Heart right ventricle (tissue), 16 donors: ENCODE measurements at regions of chr3 and their contacts with region 1.

Region 1: GRCh38 chr3:87082796-87083440 is 92.0 kb upstream of the VGLL3 start:
- DNase-seq: peak in 1 of 2 donors; percentile 23
- ATAC-seq: peak in 5 of 8 donors; percentile 33 to 79 (median 62)
- H3K4me3 ChIP-seq: no peak overlapping the region
- H3K27ac ChIP-seq: no peak overlapping the region
- H3K4me1 ChIP-seq: no peaks in the 10 kb centered on the region
- H3K27me3 ChIP-seq: no peaks in the 10 kb centered on the region
- CTCF ChIP-seq: peak in 7 of 9 donors; percentile 42 to 65 (median 56)

Region 2: DNA sequence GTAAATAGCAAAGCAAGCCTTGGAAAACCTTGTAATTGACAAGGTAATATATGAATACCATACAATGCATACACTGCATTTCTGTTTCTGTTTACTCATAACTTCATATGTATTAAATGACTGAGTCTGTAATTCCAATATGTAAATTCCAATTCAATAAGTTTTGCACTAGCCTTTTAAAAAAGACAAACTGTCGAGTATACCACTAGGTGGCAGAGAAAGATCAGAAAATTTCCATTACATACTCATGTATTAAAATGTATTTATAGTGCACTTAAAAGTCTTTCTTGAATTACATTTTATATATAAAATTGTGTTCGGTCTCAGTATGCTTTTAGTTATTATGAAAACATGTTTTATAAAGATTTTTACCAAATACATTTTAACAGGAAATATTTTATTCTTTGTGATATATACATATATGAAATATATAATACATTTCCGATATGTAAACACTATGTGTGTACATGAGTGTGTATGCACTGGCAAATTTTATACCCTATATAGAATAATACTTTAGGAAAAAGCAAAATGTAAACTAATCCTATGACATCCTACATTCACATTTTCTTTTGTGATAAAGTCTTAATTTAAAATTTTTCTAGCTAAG is 308.7 kb before region 1 on chr3:
- intact Hi-C with region 1: loop called in 9 of 10 experiments (anchors 2 to 10 kb)
- DNase-seq: no peak
- ATAC-seq: no peak
- H3K4me3 ChIP-seq: no peak overlapping the region
- H3K27ac ChIP-seq: no peak overlapping the region
- H3K4me1 ChIP-seq: no peaks in the 10 kb centered on the region
- H3K27me3 ChIP-seq: no peaks in the 10 kb centered on the region
- CTCF ChIP-seq: peak; percentile 13 to 64 (median 46)

Region 3: GRCh38 chr3:86969500-86970189 is 113.3 kb before region 1 on chr3:
- intact Hi-C with region 1: loop called in 2 of 10 experiments (anchors 10 kb)
- DNase-seq: no peak
- ATAC-seq: no peak
- H3K4me3 ChIP-seq: no peak overlapping the region
- H3K27ac ChIP-seq: no peak overlapping the region
- H3K4me1 ChIP-seq: peaks cover 0 to 3% (median 0%) of the 10 kb centered on the region in 9 donors
- H3K27me3 ChIP-seq: no peaks in the 10 kb centered on the region
- CTCF ChIP-seq: peak; percentile 16 to 63 (median 46)

Region 4: GRCh38 chr3:86990734-86991481 is 92.0 kb before region 1 on chr3 and contains the start of gene VGLL3:
- intact Hi-C with region 1: loop called in 1 of 10 experiments (anchors 10 kb)
- DNase-seq: peak; percentile 33 to 72
- ATAC-seq: peak; percentile 74 to 91 (median 82)
- H3K4me3 ChIP-seq: peak within 1 kb of the TSS; percentile 7 to 65 (median 62)
- H3K27ac ChIP-seq: peak within 1 kb of the TSS; percentile 23 to 81 (median 68)
- H3K4me1 ChIP-seq: peaks cover 0 to 21% (median 5%) of the 10 kb centered on the region in 9 donors
- H3K27me3 ChIP-seq: peaks cover 0 to 42% (median 20%) of the 10 kb centered on the region in 7 donors
- CTCF ChIP-seq: peak in 1 of 9 donors; percentile 20
- total RNA-seq, gene VGLL3: 1.3 to 15.3 (median 4.2) TPM

Region 5: DNA sequence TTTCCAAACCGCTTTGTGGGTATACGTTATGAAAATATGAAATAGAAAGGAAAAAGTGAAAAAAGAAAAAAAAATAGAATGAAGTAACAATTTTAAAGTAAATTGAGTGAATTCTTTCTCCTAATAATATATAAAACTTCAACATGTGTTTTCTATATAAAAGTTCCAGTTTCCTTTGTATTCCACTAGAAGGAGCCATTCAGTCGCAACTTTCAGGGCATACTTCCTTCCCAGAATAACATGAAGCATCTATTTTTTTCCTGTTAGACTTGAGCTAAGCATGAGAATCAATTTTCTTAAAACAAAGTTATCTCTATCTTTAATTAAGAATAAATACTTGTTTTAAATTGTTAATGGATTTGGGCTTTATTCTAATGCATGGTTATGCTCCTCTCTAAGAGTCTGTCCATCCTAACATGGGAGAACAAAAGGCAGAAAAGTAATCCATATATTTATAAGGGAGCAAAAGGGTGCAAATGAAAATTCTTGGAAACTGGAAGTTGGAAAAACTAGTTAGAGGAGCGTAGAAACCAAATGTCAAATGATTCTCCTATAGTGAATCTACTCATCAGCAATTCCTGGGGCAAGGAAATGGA is 76.0 kb before region 1 on chr3:
- intact Hi-C with region 1: loop called in 1 of 10 experiments (anchors 10 kb)
- DNase-seq: no peak
- ATAC-seq: no peak
- H3K4me3 ChIP-seq: no peak overlapping the region
- H3K27ac ChIP-seq: no peak overlapping the region
- H3K4me1 ChIP-seq: no peaks in the 10 kb centered on the region
- H3K27me3 ChIP-seq: no peaks in the 10 kb centered on the region
- CTCF ChIP-seq: peak in 5 of 9 donors; percentile 14 to 42 (median 30)

Region 6: GRCh38 chr3:87120881-87121280 is 38.0 kb after region 1 on chr3:
- intact Hi-C with region 1: no loop called
- DNase-seq: no peak
- ATAC-seq: no peak
- H3K4me3 ChIP-seq: no peak overlapping the region
- H3K27ac ChIP-seq: no peak overlapping the region
- H3K4me1 ChIP-seq: no peaks in the 10 kb centered on the region
- H3K27me3 ChIP-seq: no peaks in the 10 kb centered on the region
- CTCF ChIP-seq: no peak